Naive thymus-derived CD4-positive, alpha-beta T cell (primary cell): ENCODE measurements at regions of chr1 and their contacts with region 1.

Region 1: GRCh38 chr1:110645821-110646735 is 28.7 kb downstream of the KCNA3 start:
- DNase-seq: no peak
- ATAC-seq: peak; percentile 60
- H3K4me3 ChIP-seq: peak overlapping the region; percentile 5
- H3K4me3 Mint-ChIP-seq: peak overlapping the region in 6 of 10 donors; percentile 22 to 55 (median 37)
- H3K27ac ChIP-seq: peak overlapping the region; percentile 48
- H3K27ac Mint-ChIP-seq: peak overlapping the region in 2 of 9 donors; percentile 75 to 87
- H3K4me1 ChIP-seq: peaks cover 83 to 92% of the 10 kb centered on the region in 2 donors
- H3K4me1 Mint-ChIP-seq: peaks cover 14 to 48% (median 42%) of the 10 kb centered on the region in 7 donors
- H3K27me3 ChIP-seq: no peaks in the 10 kb centered on the region
- H3K27me3 Mint-ChIP-seq: no peaks in the 10 kb centered on the region

Region 2: GRCh38 chr1:110554871-110555801 is 90.9 kb before region 1 on chr1:
- CTCF ChIA-PET with region 1: no interaction called
- POLR2A ChIA-PET with region 1: no interaction called
- intact Hi-C with region 1: no loop called
- DNase-seq: peak; percentile 20 to 71 (median 54)
- ATAC-seq: peak; percentile 89
- H3K4me3 ChIP-seq: peak overlapping the region; percentile 25
- H3K4me3 Mint-ChIP-seq: peak overlapping the region in 9 of 10 donors; percentile 13 to 63 (median 31)
- H3K27ac ChIP-seq: no peak overlapping the region
- H3K27ac Mint-ChIP-seq: no peak overlapping the region
- H3K4me1 ChIP-seq: no peaks in the 10 kb centered on the region
- H3K4me1 Mint-ChIP-seq: peaks cover 0 to 8% (median 0%) of the 10 kb centered on the region in 7 donors
- H3K27me3 ChIP-seq: peaks cover 0 to 9% of the 10 kb centered on the region in 2 donors
- H3K27me3 Mint-ChIP-seq: peaks cover 47 to 72% (median 60%) of the 10 kb centered on the region in 5 donors

Region 3: GRCh38 chr1:110657351-110657750 is 11.3 kb after region 1 on chr1:
- CTCF ChIA-PET with region 1: interaction called, 5 read pairs
- POLR2A ChIA-PET with region 1: interaction called, 17 read pairs
- intact Hi-C with region 1: loop called in 1 of 2 experiments (anchors 1 kb)
- DNase-seq: no peak
- ATAC-seq: no peak
- H3K4me3 ChIP-seq: no peak overlapping the region
- H3K4me3 Mint-ChIP-seq: no peak overlapping the region
- H3K27ac ChIP-seq: no peak overlapping the region
- H3K27ac Mint-ChIP-seq: peak overlapping the region in 8 of 9 donors; percentile 14 to 90 (median 63)
- H3K4me1 ChIP-seq: peaks cover 4 to 13% of the 10 kb centered on the region in 2 donors
- H3K4me1 Mint-ChIP-seq: peaks cover 16 to 63% (median 47%) of the 10 kb centered on the region in 7 donors
- H3K27me3 ChIP-seq: no peaks in the 10 kb centered on the region
- H3K27me3 Mint-ChIP-seq: no peaks in the 10 kb centered on the region

Region 4: GRCh38 chr1:110663241-110663640 is 17.2 kb after region 1 on chr1:
- CTCF ChIA-PET with region 1: interaction called, 5 read pairs
- POLR2A ChIA-PET with region 1: interaction called, 17 read pairs
- intact Hi-C with region 1: loop called (anchors 1 kb)
- DNase-seq: no peak
- ATAC-seq: no peak
- H3K4me3 ChIP-seq: no peak overlapping the region
- H3K4me3 Mint-ChIP-seq: peak overlapping the region in 2 of 10 donors; percentile 12 to 20
- H3K27ac ChIP-seq: no peak overlapping the region
- H3K27ac Mint-ChIP-seq: peak overlapping the region in 5 of 9 donors; percentile 19 to 79 (median 63)
- H3K4me1 ChIP-seq: peaks cover 24 to 46% of the 10 kb centered on the region in 2 donors
- H3K4me1 Mint-ChIP-seq: peaks cover 11 to 36% (median 20%) of the 10 kb centered on the region in 7 donors
- H3K27me3 ChIP-seq: no peaks in the 10 kb centered on the region
- H3K27me3 Mint-ChIP-seq: no peaks in the 10 kb centered on the region

Region 5: GRCh38 chr1:110668549-110668948 is 22.5 kb after region 1 on chr1:
- CTCF ChIA-PET with region 1: interaction called, 5 read pairs
- POLR2A ChIA-PET with region 1: interaction called, 108 read pairs
- intact Hi-C with region 1: loop called (anchors 1 kb)
- DNase-seq: peak in 5 of 9 donors; percentile 33 to 51 (median 39)
- ATAC-seq: peak; percentile 18
- H3K4me3 ChIP-seq: peak overlapping the region; percentile 97
- H3K4me3 Mint-ChIP-seq: peak overlapping the region in 9 of 10 donors; percentile 61 to 95 (median 82)
- H3K27ac ChIP-seq: peak overlapping the region; percentile 88
- H3K27ac Mint-ChIP-seq: peak overlapping the region in 8 of 9 donors; percentile 57 to 95 (median 92)
- H3K4me1 ChIP-seq: peaks cover 25 to 42% of the 10 kb centered on the region in 2 donors
- H3K4me1 Mint-ChIP-seq: peaks cover 21 to 35% (median 31%) of the 10 kb centered on the region in 7 donors
- H3K27me3 ChIP-seq: no peaks in the 10 kb centered on the region
- H3K27me3 Mint-ChIP-seq: peaks cover 0 to 2% (median 0%) of the 10 kb centered on the region in 5 donors

Region 6: GRCh38 chr1:110879758-110880606 is 233.9 kb after region 1 on chr1:
- CTCF ChIA-PET with region 1: no interaction called
- POLR2A ChIA-PET with region 1: no interaction called
- intact Hi-C with region 1: loop called in 1 of 2 experiments (anchors 1 kb)
- DNase-seq: peak in 2 of 9 donors; percentile 63 to 65
- ATAC-seq: peak; percentile 73
- H3K4me3 ChIP-seq: peak overlapping the region; percentile 41
- H3K4me3 Mint-ChIP-seq: peak overlapping the region; percentile 78 to 96 (median 88)
- H3K27ac ChIP-seq: peak overlapping the region; percentile 44
- H3K27ac Mint-ChIP-seq: peak overlapping the region; percentile 89 to 99 (median 93)
- H3K4me1 ChIP-seq: peaks cover 69 to 77% of the 10 kb centered on the region in 2 donors
- H3K4me1 Mint-ChIP-seq: peaks cover 71 to 96% (median 85%) of the 10 kb centered on the region in 7 donors
- H3K27me3 ChIP-seq: no peaks in the 10 kb centered on the region
- H3K27me3 Mint-ChIP-seq: no peaks in the 10 kb centered on the region

Region 7: DNA sequence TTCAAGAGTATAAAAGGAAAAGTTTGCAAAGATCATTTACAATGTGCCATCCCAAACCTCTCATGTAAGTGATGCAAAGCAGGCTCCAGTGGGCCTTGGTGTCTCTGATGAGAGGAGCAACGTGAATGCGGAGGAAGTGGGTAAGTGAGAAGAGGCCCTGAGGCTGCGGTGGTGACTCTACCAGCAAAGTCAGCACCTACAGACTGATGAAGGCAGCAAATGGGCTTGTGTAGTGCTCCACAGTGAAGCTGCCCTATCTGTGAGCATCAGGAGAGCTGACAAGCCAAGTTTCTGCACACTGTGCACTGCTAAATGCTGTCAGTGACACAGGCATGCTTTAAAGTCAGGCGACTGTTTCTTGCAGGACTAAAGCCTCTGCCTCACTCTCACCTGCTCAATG is 957.9 kb after region 1 on chr1:
- CTCF ChIA-PET with region 1: no interaction called
- POLR2A ChIA-PET with region 1: no interaction called
- intact Hi-C with region 1: loop called in 1 of 2 experiments (anchors 10 kb)
- DNase-seq: peak; percentile 33 to 88 (median 80)
- ATAC-seq: peak; percentile 99
- H3K4me3 ChIP-seq: no peak overlapping the region
- H3K4me3 Mint-ChIP-seq: peak overlapping the region; percentile 44 to 84 (median 72)
- H3K27ac ChIP-seq: peak overlapping the region; percentile 57
- H3K27ac Mint-ChIP-seq: peak overlapping the region; percentile 83 to 98 (median 89)
- H3K4me1 ChIP-seq: peaks cover 49 to 77% of the 10 kb centered on the region in 2 donors
- H3K4me1 Mint-ChIP-seq: peaks cover 48 to 77% (median 74%) of the 10 kb centered on the region in 7 donors
- H3K27me3 ChIP-seq: no peaks in the 10 kb centered on the region
- H3K27me3 Mint-ChIP-seq: no peaks in the 10 kb centered on the region